ENCODE measurements at regions of chr18 and their contacts with region 1.

Region 1: GRCh38 chr18:10560450-10561045 is 34.7 kb downstream of the NAPG start:
- DNase-seq: peak; percentile 33
- H3K4me3 Mint-ChIP-seq: no peak overlapping the region
- H3K27ac Mint-ChIP-seq: no peak overlapping the region
- H3K4me1 Mint-ChIP-seq: no peaks in the 10 kb centered on the region
- H3K27me3 Mint-ChIP-seq: no peaks in the 10 kb centered on the region

Region 2: DNA sequence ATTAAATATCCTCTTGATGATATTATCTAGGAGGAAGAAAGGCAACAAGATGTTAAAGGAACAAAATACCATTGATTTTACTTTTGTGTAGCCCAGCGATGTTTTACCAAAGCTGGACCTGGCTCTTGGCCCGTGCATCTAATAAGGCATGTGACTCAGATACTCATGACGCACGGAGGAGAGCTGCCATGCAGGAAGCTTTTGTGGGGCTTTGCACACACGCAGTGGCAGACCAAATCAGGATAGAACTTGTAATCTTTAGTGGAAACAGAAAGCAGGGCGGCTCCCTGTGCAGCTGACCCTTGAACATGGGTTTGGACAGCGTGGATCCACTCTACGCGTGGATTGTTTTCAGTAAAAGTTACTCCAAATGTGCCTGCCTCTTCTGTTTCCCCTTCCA is 155.2 kb after region 1 on chr18:
- intact Hi-C with region 1: loop called (anchors 10 kb)
- DNase-seq: no peak
- H3K4me3 Mint-ChIP-seq: no peak overlapping the region
- H3K27ac Mint-ChIP-seq: no peak overlapping the region
- H3K4me1 Mint-ChIP-seq: no peaks in the 10 kb centered on the region
- H3K27me3 Mint-ChIP-seq: no peaks in the 10 kb centered on the region

Measured in activated T-helper 1 cell treated with anti-CD3 and anti-CD28 coated beads, Interleukin-12 subunit alpha, Interleukin-12 subunit beta, Interleukin-2, Interleukin-4 antibody, amounts not matched to agents 30 ng/mL and 10 ng/mL and 1 ng/mL, durations not matched to agents 14 hours and 24 hours and 36 hours (primary cell).